Calu3 (cell line): ENCODE measurements at regions of chr4 and their contacts with region 1.

Region 1: DNA sequence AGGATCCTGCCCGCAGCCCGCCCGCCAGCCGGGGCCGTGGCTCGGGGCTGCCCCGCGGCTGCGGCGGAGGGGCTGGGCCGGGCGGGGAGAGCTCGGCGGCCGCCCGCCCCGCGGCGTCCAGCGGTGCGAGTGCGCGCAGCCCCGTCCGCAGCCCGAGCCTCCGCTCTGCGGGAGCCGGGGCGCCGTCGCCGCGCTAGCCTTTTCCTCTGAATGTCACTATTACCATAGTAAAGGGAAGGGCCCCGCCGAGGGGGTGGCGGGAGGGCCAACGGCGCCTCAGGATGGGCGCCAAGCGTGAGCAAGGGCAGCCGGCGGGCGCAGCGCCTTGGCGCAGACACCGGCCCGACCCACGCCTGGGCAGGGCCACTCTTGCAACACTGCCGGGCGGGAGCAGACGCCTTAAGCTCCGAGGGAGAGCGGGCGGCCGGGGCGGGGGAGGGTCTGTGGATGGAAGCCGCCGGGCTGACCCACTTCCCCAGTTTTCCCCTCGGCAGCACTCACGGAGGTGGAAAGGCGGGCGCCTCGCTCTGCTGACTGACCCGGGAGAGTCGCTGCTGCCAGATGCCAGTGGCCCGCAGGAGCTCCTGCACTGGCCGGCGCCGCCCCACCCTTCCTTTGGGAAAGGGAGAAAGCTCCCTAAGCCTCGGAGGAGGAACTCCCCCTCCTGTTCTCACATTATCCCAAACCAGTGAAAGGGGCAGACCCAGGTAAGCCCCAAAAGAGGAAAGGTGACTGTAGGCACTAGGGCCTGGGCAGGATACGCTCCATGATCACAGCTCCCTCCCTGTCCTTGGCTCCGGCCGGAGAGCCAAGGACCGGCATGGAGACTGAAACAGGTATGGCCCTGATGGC is 329.4 kb downstream of the HNRNPD start:
- DNase-seq: peak; percentile 85
- H3K4me3 Mint-ChIP-seq: peak overlapping the region; percentile 83
- H3K27ac Mint-ChIP-seq: no peak overlapping the region
- H3K4me1 Mint-ChIP-seq: peaks cover 11% of the 10 kb centered on the region
- H3K27me3 Mint-ChIP-seq: no peaks in the 10 kb centered on the region
- CTCF ChIP-seq: no peak

Region 2: DNA sequence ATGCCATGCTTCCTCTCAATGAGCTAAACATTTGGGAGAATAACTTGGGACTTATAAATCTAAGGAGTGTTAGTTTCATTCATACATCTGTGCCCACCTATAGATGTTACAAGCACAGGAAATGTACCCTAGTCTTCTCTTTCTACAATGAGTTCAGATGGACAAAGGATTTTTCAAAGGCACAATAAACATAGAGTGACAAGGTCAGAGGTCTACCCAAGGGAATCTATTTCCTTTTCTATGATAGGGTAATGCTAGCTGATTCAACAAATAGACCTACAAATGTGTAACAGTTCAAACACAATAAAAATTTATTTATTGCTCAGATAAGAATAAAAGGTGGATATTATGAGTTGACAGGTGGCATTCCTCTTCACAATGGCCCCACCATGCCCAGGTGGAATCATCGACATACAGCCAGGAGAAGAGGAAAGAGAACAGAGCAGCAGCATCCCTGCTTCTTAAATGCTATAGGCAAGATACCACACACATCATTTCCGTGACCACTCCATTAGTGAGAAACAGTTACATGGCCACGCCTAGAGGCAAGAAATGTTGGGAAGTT is 92.4 kb before region 1 on chr4:
- CTCF ChIA-PET with region 1: no interaction called
- intact Hi-C with region 1: loop called (anchors 10 kb)
- DNase-seq: no peak
- H3K4me3 Mint-ChIP-seq: no peak overlapping the region
- H3K27ac Mint-ChIP-seq: no peak overlapping the region
- H3K4me1 Mint-ChIP-seq: peaks cover 27% of the 10 kb centered on the region
- H3K27me3 Mint-ChIP-seq: no peaks in the 10 kb centered on the region
- CTCF ChIP-seq: no peak

Region 3: DNA sequence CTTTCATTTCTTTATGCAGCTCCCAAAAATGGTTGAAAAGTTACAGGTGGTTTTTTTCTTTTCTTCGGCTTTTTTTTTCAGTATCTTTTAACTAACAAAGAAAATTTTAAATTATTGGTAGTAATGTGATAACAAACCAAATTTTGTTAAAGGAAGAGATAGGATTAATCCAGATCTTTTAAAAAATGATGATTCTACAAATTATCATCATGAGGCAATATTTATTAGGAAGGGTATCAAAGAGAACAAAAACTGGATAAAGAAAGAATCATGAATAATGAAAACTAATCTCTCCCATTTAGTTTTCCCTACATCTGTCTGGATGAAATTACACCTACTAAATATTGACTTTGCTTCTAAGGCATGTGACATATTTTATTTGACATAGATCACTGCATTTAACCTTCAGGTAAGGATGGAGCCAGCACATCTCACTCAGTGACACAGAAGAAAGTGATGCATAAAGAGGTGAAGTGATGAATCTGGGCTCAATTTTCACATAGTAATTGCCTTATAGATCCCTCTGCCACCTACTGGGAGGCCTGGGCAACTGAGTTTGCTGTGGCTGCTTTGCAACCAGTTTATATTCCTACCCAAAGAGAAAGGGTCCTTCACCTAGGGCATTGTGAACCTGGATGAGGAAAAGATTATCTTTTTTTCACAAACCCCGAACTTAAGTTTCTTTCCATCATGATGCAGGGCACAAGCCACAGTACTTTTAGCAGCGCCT is 173.8 kb after region 1 on chr4:
- CTCF ChIA-PET with region 1: no interaction called
- intact Hi-C with region 1: loop called (anchors 1 kb)
- DNase-seq: peak; percentile 37
- H3K4me3 Mint-ChIP-seq: no peak overlapping the region
- H3K27ac Mint-ChIP-seq: peak overlapping the region; percentile 62
- H3K4me1 Mint-ChIP-seq: peaks cover 46% of the 10 kb centered on the region
- H3K27me3 Mint-ChIP-seq: no peaks in the 10 kb centered on the region
- CTCF ChIP-seq: peak; percentile 36

Region 4: GRCh38 chr4:82469791-82470345 is 425.5 kb after region 1 on chr4:
- CTCF ChIA-PET with region 1: no interaction called
- intact Hi-C with region 1: no loop called
- DNase-seq: no peak
- H3K4me3 Mint-ChIP-seq: no peak overlapping the region
- H3K27ac Mint-ChIP-seq: no peak overlapping the region
- H3K4me1 Mint-ChIP-seq: no peaks in the 10 kb centered on the region
- H3K27me3 Mint-ChIP-seq: no peaks in the 10 kb centered on the region
- CTCF ChIP-seq: no peak